Heart right ventricle (tissue), 16 donors: ENCODE measurements at regions of chr4 and their contacts with region 1.

Region 1: GRCh38 chr4:24024605-24025004 is 134.8 kb upstream of the PPARGC1A start:
- DNase-seq: no peak
- ATAC-seq: no peak
- H3K4me3 ChIP-seq: no peak overlapping the region
- H3K27ac ChIP-seq: no peak overlapping the region
- H3K4me1 ChIP-seq: no peaks in the 10 kb centered on the region
- H3K27me3 ChIP-seq: no peaks in the 10 kb centered on the region
- CTCF ChIP-seq: no peak

Region 2: DNA sequence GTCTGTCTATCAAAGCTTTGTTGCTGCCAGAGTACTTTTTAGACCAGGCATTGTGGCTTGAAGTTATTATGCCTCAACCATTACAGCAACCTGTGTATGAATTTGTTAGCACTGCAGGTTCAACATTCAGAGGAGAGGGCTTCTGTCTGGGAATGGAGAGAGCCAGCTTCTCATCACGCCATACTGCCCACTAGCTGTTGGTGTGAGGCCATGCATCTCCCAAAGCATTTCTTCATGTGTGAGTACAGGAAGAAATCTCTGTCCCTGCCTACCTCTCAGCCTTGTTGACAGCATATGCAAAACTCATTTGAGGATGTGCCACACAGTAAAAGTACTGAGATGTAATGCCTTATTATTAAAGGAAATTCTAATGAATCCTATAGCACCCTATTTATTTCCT is 57.9 kb before region 1 on chr4:
- intact Hi-C with region 1: loop called in 1 of 10 experiments (anchors 10 kb)
- DNase-seq: no peak
- ATAC-seq: no peak
- H3K4me3 ChIP-seq: no peak overlapping the region
- H3K27ac ChIP-seq: no peak overlapping the region
- H3K4me1 ChIP-seq: peaks cover 0 to under 1% (median 0%) of the 10 kb centered on the region in 9 donors
- H3K27me3 ChIP-seq: no peaks in the 10 kb centered on the region
- CTCF ChIP-seq: peak in 6 of 9 donors; percentile 18 to 30 (median 20)